GM23248 (cell line): ENCODE measurements at regions of chr13 and their contacts with region 1.

Region 1: GRCh38 chr13:43878892-43879754 is at the start of gene CCDC122:
- DNase-seq: peak; percentile 96
- H3K4me3 ChIP-seq: peak within 1 kb of the TSS; percentile 86
- H3K27ac ChIP-seq: peak within 1 kb of the TSS; percentile 76
- H3K4me1 ChIP-seq: peaks cover 5% of the 10 kb centered on the region; the same call in 1 of the 2 replicates
- H3K27me3 ChIP-seq: no peaks in the 10 kb centered on the region
- total RNA-seq, gene CCDC122: 1.3 and 7.6 TPM in 2 replicates

Region 2: DNA sequence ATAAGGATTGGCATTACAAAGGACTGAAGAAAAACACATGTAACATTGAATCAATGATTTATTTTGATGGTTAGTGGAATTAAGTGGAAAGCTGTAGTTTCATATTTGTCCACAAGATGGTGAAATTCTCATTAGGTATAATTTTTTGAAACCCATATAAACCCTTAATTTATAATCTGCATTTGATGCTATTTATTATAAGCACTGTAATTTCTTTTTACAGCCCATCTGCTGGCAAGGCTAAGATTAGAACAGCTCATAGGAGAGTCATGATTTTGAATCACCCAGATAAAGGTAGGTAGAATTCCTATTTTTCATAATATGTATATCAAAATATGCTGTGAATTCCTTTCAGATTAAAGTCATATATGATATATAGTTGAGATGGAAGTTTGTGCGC is 793.6 kb before region 1 on chr13:
- in situ Hi-C with region 1: loop called (anchors 10 kb)
- DNase-seq: peak; percentile 54
- H3K4me3 ChIP-seq: no peak overlapping the region
- H3K27ac ChIP-seq: no peak overlapping the region
- H3K4me1 ChIP-seq: no peaks in the 10 kb centered on the region
- H3K27me3 ChIP-seq: no peaks in the 10 kb centered on the region